SK-N-SH (cell line): ENCODE measurements at regions of chr18 and their contacts with region 1.

Region 1: DNA sequence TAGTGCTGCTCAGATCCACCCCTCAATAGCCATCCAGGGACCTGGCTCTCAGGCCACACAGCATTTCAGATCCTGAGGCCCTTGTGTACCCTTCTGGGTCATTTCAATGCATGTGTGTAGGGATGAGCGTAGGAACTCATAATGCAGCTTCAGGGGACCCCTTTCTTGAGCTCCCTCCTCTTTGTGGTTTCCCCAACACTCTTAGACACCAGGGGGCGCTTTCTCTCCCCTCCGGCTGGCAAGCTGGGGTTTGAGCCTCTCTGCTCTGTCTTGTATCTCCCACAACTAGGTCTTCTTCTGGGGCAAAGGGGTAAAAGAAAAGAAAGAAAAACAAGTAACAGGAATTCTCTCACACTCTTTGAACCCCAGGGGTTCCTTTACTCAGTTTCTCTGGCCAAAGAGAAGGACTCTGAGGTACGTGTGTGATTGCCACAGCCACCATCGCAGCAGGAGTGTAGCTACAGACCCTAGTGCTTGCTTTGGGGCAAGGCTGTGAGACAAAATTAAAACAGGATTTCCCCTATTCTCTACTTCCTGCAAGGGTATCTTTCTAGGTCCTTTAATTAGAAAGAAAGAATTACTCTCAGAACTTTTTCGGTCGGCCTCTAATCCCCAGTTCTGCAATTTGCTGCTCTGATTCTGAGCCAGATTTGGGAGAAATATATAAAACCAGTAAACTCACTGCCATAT is 38.0 kb downstream of the CABYR start:
- DNase-seq: peak; percentile 71
- H3K4me3 ChIP-seq: peak overlapping the region in 1 of 2 experiments; percentile 35; a peak in 1 of 4 replicates
- H3K27ac ChIP-seq: no peak overlapping the region
- H3K4me1 ChIP-seq: no peaks in the 10 kb centered on the region
- H3K27me3 ChIP-seq: no peaks in the 10 kb centered on the region
- CTCF ChIP-seq: peak; percentile 78
- EP300 ChIP-seq: no peak
- RAD21 ChIP-seq: peak; percentile 67

Region 2: GRCh38 chr18:24153397-24153796 is 23.5 kb before region 1 on chr18:
- CTCF ChIA-PET with region 1: interaction called, 10 read pairs
- POLR2A ChIA-PET with region 1: no interaction called
- DNase-seq: no peak
- H3K4me3 ChIP-seq: no peak overlapping the region
- H3K27ac ChIP-seq: no peak overlapping the region
- H3K4me1 ChIP-seq: no peaks in the 10 kb centered on the region; a peak in 1 of 4 replicates
- H3K27me3 ChIP-seq: no peaks in the 10 kb centered on the region
- CTCF ChIP-seq: no peak
- EP300 ChIP-seq: no peak
- RAD21 ChIP-seq: no peak

Region 3: GRCh38 chr18:24189007-24189528 is 12.2 kb after region 1 on chr18:
- CTCF ChIA-PET with region 1: interaction called, 24 read pairs
- POLR2A ChIA-PET with region 1: no interaction called
- DNase-seq: no peak
- H3K4me3 ChIP-seq: no peak overlapping the region
- H3K27ac ChIP-seq: no peak overlapping the region
- H3K4me1 ChIP-seq: peaks cover 3 to 9% of the 10 kb centered on the region in 2 experiments; a peak in 3 of 4 replicates
- H3K27me3 ChIP-seq: no peaks in the 10 kb centered on the region
- CTCF ChIP-seq: no peak
- EP300 ChIP-seq: no peak
- RAD21 ChIP-seq: no peak